ENCODE measurements at regions of chr11 and their contacts with region 1.

Region 1: DNA sequence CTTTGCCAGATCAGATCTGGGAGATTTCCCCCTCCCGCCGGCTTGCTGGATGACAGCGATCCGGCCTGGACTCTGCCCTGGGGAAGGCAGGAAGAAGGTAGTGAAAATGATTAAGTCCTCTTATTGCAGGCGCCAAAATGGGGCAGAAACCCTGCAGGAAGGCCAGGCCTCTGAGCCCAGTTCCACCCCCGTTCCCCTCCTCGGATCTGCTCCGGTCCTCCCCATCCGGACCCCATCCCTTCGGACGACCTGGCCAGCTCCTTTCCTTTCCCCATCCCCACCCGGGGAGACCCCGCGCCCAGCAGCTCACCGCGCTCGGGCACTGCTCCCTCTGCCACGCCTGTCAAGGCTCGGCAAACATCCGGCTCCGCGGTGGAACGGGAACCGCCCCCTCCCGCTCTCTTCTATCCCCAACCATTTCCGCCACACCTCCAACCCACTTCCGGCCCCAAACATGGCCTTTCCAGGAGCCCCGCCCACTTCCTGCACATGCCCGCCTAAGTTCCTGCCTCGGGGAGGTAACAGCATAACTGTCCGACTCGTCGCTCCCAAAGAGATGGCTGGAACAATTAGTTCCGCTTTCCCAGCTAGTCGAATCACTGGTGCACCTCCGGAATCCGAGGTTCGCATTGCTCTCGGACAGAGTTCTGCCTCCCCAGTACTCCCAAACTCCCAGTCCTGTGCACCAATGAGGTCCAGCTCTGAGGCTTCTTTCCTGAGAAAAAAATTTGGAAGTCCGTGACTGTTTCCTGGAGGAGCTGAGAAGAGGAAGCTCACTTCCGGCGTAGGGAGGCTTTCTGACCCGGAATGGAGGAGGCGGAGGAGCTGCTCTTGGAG is at the starts of genes ARHGAP1 and ZNF408:
- DNase-seq: peak; percentile 98
- H3K4me3 Mint-ChIP-seq: peak within 1 kb of the TSS; percentile 99
- H3K27ac Mint-ChIP-seq: peak within 1 kb of the TSS; percentile 98
- H3K4me1 Mint-ChIP-seq: peaks cover 21% of the 10 kb centered on the region
- H3K27me3 Mint-ChIP-seq: no peaks in the 10 kb centered on the region
- CTCF ChIP-seq: no peak
- total RNA-seq, gene ARHGAP1: 61.0 and 63.6 TPM in 2 replicates
- total RNA-seq, gene ZNF408: 14.5 and 15.3 TPM in 2 replicates

Region 2: GRCh38 chr11:46675288-46675851 is 25.1 kb before region 1 on chr11:
- CTCF ChIA-PET with region 1: interaction called, 3 read pairs
- POLR2A ChIA-PET with region 1: interaction called, 29 read pairs
- intact Hi-C with region 1: no loop called
- DNase-seq: peak; percentile 71
- H3K4me3 Mint-ChIP-seq: no peak overlapping the region
- H3K27ac Mint-ChIP-seq: peak overlapping the region; percentile 97
- H3K4me1 Mint-ChIP-seq: peaks cover 14% of the 10 kb centered on the region
- H3K27me3 Mint-ChIP-seq: no peaks in the 10 kb centered on the region
- CTCF ChIP-seq: peak; percentile 10

Region 3: GRCh38 chr11:46686886-46687795 is 13.3 kb before region 1 on chr11:
- CTCF ChIA-PET with region 1: interaction called, 9 read pairs
- POLR2A ChIA-PET with region 1: interaction called, 150 read pairs
- intact Hi-C with region 1: no loop called
- DNase-seq: peak; percentile 95
- H3K4me3 Mint-ChIP-seq: peak overlapping the region; percentile 49
- H3K27ac Mint-ChIP-seq: peak overlapping the region; percentile 96
- H3K4me1 Mint-ChIP-seq: peaks cover 33% of the 10 kb centered on the region
- H3K27me3 Mint-ChIP-seq: no peaks in the 10 kb centered on the region
- CTCF ChIP-seq: no peak

Region 4: DNA sequence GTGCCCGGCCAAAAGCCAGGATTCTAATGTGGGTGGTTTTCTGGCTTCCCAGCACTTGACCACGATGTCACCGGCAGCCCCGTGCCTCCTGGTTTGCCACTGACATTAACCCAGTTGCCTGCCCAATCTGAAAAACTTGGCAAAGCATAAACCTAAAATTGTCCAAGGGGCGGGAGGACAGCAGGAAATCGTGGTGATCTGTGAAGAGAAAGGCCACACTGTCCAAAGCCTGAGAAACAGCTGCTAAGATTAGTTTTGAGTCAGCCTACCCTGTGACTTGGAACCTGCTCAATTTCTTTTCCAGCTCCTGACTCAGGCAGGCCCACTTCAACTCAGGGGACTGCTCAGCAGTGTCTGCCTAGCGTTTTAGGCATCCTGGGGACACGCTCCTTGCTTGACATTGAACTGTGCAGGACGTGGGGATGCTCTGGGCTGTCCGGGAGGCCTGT is 10.4 kb after region 1 on chr11:
- CTCF ChIA-PET with region 1: no interaction called
- POLR2A ChIA-PET with region 1: interaction called, 23 read pairs
- intact Hi-C with region 1: no loop called
- DNase-seq: peak; percentile 31
- H3K4me3 Mint-ChIP-seq: no peak overlapping the region
- H3K27ac Mint-ChIP-seq: no peak overlapping the region
- H3K4me1 Mint-ChIP-seq: no peaks in the 10 kb centered on the region
- H3K27me3 Mint-ChIP-seq: no peaks in the 10 kb centered on the region
- CTCF ChIP-seq: no peak